ENCODE measurements at regions of chr5 and their contacts with region 1.

Region 1: GRCh38 chr5:154544646-154545045 is 66.6 kb upstream of the HAND1 start:
- DNase-seq: no peak
- ATAC-seq: no peak
- H3K4me3 ChIP-seq: no peak overlapping the region
- H3K27ac ChIP-seq: no peak overlapping the region
- H3K4me1 ChIP-seq: peaks cover 12% of the 10 kb centered on the region
- H3K27me3 ChIP-seq: peaks cover 4% of the 10 kb centered on the region; the same call in 1 of the 2 replicates
- CTCF ChIP-seq: no peak

Region 2: GRCh38 chr5:154559398-154560276 is 15.0 kb after region 1 on chr5:
- CTCF ChIA-PET with region 1: no interaction called
- POLR2A ChIA-PET with region 1: interaction called, 14 read pairs
- in situ Hi-C with region 1: no loop called
- intact Hi-C with region 1: no loop called
- DNase-seq: no peak
- ATAC-seq: no peak
- H3K4me3 ChIP-seq: no peak overlapping the region
- H3K27ac ChIP-seq: no peak overlapping the region
- H3K4me1 ChIP-seq: no peaks in the 10 kb centered on the region
- H3K27me3 ChIP-seq: no peaks in the 10 kb centered on the region
- CTCF ChIP-seq: no peak

Measured in Panc1 (cell line).